ENCODE measurements at regions of chr6 and their contacts with region 1.

Region 1: DNA sequence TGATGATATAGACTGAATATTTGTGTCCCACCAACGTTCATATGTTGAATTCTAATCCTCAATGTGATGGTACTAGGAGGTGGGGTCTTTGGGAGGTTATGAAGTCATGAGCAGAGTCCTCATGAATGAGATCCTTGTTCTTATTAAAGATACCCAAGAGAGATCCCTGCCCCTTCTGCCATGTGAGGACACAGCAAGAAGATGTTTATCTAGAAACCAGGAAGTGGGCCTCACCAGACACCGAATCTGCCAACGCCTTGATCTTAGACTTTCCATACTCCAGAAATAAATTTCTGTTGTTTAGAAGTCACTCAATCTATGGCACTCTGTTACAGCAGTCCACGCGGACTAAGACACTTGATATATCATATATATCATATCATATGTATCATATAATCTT is 67.7 kb upstream of the GCM1 start:
- DNase-seq: no peak
- ATAC-seq: peak; percentile 69
- H3K4me3 Mint-ChIP-seq: peak overlapping the region; percentile 41
- H3K27ac Mint-ChIP-seq: peak overlapping the region; percentile 88
- H3K4me1 Mint-ChIP-seq: peaks cover 71% of the 10 kb centered on the region
- H3K27me3 Mint-ChIP-seq: no peaks in the 10 kb centered on the region
- CTCF ChIP-seq: no peak

Region 2: DNA sequence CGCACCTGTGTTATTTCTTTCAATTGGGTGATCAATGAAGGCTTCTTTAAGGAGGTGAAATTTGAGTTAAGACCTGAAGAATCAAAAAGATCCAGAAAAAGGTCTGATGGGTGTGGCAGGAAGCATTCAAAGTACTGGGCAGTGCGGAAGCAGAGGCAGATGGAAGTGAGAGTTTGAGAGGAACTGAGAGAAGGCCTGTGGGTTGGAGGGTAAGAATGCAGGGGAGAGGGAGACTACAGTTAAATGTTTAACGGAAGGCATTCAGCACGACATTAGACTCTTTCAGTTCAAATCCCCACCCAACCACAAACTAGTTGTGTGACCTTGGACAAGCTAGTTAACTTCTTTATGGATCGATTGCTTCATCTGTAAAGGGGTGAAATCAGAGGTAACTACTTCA is 17.1 kb before region 1 on chr6:
- CTCF ChIA-PET with region 1: no interaction called
- POLR2A ChIA-PET with region 1: interaction called, 3 read pairs
- intact Hi-C with region 1: loop called (anchors 2 kb)
- DNase-seq: no peak
- ATAC-seq: peak; percentile 97
- H3K4me3 Mint-ChIP-seq: peak overlapping the region; percentile 17
- H3K27ac Mint-ChIP-seq: peak overlapping the region; percentile 80
- H3K4me1 Mint-ChIP-seq: peaks cover 75% of the 10 kb centered on the region
- H3K27me3 Mint-ChIP-seq: no peaks in the 10 kb centered on the region
- CTCF ChIP-seq: no peak

Region 3: DNA sequence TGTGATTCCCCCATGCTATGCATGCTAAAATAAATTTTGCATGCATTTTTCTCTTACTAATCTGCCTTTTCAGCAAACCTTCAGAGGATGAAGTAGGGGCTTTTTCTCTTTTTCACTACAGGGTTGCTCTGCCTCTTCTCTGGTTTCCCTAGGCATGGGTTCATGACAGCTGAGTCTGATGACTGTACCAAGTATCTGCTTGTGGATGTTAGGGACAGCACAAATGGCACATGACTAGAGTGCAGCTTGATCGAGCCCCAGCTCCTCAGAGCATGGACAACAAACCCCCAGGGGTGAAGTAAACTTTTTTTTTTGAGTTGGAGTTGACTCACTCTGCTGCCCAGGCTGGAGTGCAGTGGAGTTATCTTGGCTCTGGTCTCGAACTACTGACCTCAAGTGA is 10.5 kb before region 1 on chr6:
- CTCF ChIA-PET with region 1: no interaction called
- POLR2A ChIA-PET with region 1: interaction called, 3 read pairs
- intact Hi-C with region 1: loop called (anchors 1 kb)
- DNase-seq: no peak
- ATAC-seq: peak; percentile 79
- H3K4me3 Mint-ChIP-seq: peak overlapping the region; percentile 61
- H3K27ac Mint-ChIP-seq: peak overlapping the region; percentile 67
- H3K4me1 Mint-ChIP-seq: peaks cover 57% of the 10 kb centered on the region
- H3K27me3 Mint-ChIP-seq: no peaks in the 10 kb centered on the region
- CTCF ChIP-seq: no peak

Region 4: GRCh38 chr6:53233309-53233708 is 17.0 kb after region 1 on chr6:
- CTCF ChIA-PET with region 1: no interaction called
- POLR2A ChIA-PET with region 1: interaction called, 5 read pairs
- intact Hi-C with region 1: loop called (anchors 2 kb)
- DNase-seq: no peak
- ATAC-seq: no peak
- H3K4me3 Mint-ChIP-seq: no peak overlapping the region
- H3K27ac Mint-ChIP-seq: peak overlapping the region; percentile 97
- H3K4me1 Mint-ChIP-seq: peaks cover 80% of the 10 kb centered on the region
- H3K27me3 Mint-ChIP-seq: no peaks in the 10 kb centered on the region
- CTCF ChIP-seq: no peak

Measured in activated B cell treated with CpG ODN at 0.5 μM for 24 hours (primary cell).